ENCODE measurements at regions of chr11 and their contacts with region 1.

Region 1: DNA sequence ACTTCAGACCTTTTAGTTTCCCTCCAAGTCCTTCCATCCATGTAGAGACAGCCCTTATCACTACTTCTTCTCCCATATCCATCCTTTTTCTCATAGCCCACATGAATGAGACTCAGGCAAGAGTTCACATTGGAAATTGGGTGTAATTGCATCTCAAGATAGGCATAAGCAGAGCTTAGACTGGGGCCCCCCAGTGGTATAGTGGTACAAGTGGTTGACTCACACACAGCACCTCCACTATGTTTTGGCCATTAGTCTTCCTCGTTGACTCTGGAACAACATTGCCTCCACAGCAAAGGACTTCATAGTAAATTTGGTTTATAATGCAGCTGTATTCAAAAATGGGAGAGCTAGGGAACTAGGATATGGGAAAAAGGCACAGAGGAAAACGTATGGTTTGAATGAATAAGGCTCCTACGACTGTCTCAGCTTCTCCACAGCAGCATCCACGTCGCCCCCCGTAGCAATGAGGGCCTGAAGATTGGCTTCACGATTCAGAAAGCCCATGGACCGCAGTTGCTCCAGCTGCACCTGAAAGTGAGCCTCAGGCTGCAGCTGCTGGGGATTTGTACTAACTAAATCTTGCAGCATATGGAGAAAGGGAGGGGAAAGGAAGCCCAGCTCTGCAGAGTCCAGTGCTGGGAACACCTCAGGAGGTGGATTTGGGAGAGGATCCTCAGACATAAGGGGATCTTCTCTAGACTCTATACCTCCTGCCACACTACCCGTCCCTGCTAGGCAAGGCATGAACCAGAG is 2.4 kb downstream of the UBQLN3 start:
- DNase-seq: peak; percentile 36 to 62 (median 48)
- ATAC-seq: peak; percentile 48
- H3K4me3 ChIP-seq: no peak overlapping the region
- H3K27ac ChIP-seq: no peak overlapping the region
- H3K4me1 ChIP-seq: peaks cover 24 to 49% of the 10 kb centered on the region in 2 experiments; a peak in 4 of 5 replicates
- H3K27me3 ChIP-seq: no peaks in the 10 kb centered on the region
- CTCF ChIP-seq: peak; percentile 52 to 62 (median 59); a peak in 5 of 6 replicates
- EP300 ChIP-seq: no peak
- POLR2A ChIP-seq: no peak
- RAD21 ChIP-seq: peak in 1 of 2 experiments; percentile 24; a peak in 1 of 4 replicates

Region 2: DNA sequence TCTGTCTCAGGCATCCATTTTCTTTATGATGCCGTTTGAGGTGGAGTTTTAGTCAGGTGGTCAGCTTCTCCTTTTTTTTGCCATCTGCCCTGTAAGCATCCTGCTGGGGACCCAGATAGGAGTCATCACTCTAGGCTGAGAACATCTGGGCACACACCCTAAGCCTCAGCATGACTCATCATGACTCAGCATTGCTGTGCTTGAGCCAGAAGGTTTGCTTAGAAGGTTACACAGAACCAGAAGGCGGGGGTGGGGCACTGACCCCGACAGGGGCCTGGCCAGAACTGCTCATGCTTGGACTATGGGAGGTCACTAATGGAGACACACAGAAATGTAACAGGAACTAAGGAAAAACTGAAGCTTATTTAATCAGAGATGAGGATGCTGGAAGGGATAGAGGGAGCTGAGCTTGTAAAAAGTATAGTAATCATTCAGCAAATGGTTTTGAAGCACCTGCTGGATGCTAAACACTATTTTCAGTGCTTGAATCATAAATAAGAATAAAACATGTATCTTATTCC is 226.7 kb before region 1 on chr11:
- CTCF ChIA-PET with region 1: no interaction called
- POLR2A ChIA-PET with region 1: interaction called, 9 read pairs
- in situ Hi-C with region 1: no loop called
- intact Hi-C with region 1: loop called (anchors 10 kb)
- DNase-seq: peak; percentile 91 to 100 (median 94)
- ATAC-seq: peak; percentile 86
- H3K4me3 ChIP-seq: no peak overlapping the region
- H3K27ac ChIP-seq: peak overlapping the region; percentile 87
- H3K4me1 ChIP-seq: peaks cover 29 to 86% of the 10 kb centered on the region in 2 experiments
- H3K27me3 ChIP-seq: no peaks in the 10 kb centered on the region
- CTCF ChIP-seq: peak in 1 of 3 experiments; percentile 11; a peak in 1 of 6 replicates
- EP300 ChIP-seq: peak; percentile 99
- POLR2A ChIP-seq: peak; percentile 44; the same call in 1 of the 2 replicates
- RAD21 ChIP-seq: peak; percentile 33 to 34; a peak in 3 of 4 replicates

Region 3: GRCh38 chr11:5489576-5490357 is 17.6 kb before region 1 on chr11:
- CTCF ChIA-PET with region 1: no interaction called
- POLR2A ChIA-PET with region 1: interaction called, 75 read pairs
- in situ Hi-C with region 1: no loop called
- intact Hi-C with region 1: no loop called
- DNase-seq: no peak
- ATAC-seq: no peak
- H3K4me3 ChIP-seq: no peak overlapping the region
- H3K27ac ChIP-seq: no peak overlapping the region
- H3K4me1 ChIP-seq: peaks cover 4 to 5% of the 10 kb centered on the region in 2 experiments; a peak in 1 of 5 replicates
- H3K27me3 ChIP-seq: no peaks in the 10 kb centered on the region
- CTCF ChIP-seq: no peak
- EP300 ChIP-seq: no peak
- POLR2A ChIP-seq: no peak
- RAD21 ChIP-seq: no peak

Region 4: GRCh38 chr11:5527716-5528115 is 20.4 kb after region 1 on chr11:
- CTCF ChIA-PET with region 1: no interaction called
- POLR2A ChIA-PET with region 1: interaction called, 123 read pairs
- in situ Hi-C with region 1: no loop called
- intact Hi-C with region 1: no loop called
- DNase-seq: no peak
- ATAC-seq: no peak
- H3K4me3 ChIP-seq: no peak overlapping the region
- H3K27ac ChIP-seq: no peak overlapping the region
- H3K4me1 ChIP-seq: peaks cover 0 to 21% of the 10 kb centered on the region in 2 experiments; a peak in 4 of 5 replicates
- H3K27me3 ChIP-seq: peaks cover 0 to 7% of the 10 kb centered on the region in 2 experiments; a peak in 1 of 5 replicates
- CTCF ChIP-seq: no peak
- EP300 ChIP-seq: no peak
- POLR2A ChIP-seq: no peak
- RAD21 ChIP-seq: no peak

Region 5: GRCh38 chr11:5684646-5685362 is 177.4 kb after region 1 on chr11 and contains the start of gene TRIM5:
- CTCF ChIA-PET with region 1: no interaction called
- POLR2A ChIA-PET with region 1: interaction called, 11 read pairs
- in situ Hi-C with region 1: no loop called
- intact Hi-C with region 1: no loop called
- DNase-seq: peak; percentile 93 to 96 (median 94)
- ATAC-seq: peak; percentile 99
- H3K4me3 ChIP-seq: peak within 1 kb of the TSS; percentile 45
- H3K27ac ChIP-seq: peak within 1 kb of the TSS; percentile 89
- H3K4me1 ChIP-seq: peaks cover 0 to 2% of the 10 kb centered on the region in 2 experiments; a peak in 2 of 5 replicates
- H3K27me3 ChIP-seq: no peaks in the 10 kb centered on the region
- CTCF ChIP-seq: peak; percentile 77 to 84 (median 82)
- EP300 ChIP-seq: peak; percentile 45; the same call in 1 of the 2 replicates
- POLR2A ChIP-seq: peak; percentile 75
- RAD21 ChIP-seq: peak; percentile 76 to 82
- polyA plus RNA-seq, gene TRIM5: 13.7 to 18.0 TPM

Measured in K562 (cell line).